Activated CD4-positive, alpha-beta memory T cell treated with anti-CD3 and anti-CD28 coated beads for 36 hours (primary cell): ENCODE measurements at regions of chr2 and their contacts with region 1.

Region 1: DNA sequence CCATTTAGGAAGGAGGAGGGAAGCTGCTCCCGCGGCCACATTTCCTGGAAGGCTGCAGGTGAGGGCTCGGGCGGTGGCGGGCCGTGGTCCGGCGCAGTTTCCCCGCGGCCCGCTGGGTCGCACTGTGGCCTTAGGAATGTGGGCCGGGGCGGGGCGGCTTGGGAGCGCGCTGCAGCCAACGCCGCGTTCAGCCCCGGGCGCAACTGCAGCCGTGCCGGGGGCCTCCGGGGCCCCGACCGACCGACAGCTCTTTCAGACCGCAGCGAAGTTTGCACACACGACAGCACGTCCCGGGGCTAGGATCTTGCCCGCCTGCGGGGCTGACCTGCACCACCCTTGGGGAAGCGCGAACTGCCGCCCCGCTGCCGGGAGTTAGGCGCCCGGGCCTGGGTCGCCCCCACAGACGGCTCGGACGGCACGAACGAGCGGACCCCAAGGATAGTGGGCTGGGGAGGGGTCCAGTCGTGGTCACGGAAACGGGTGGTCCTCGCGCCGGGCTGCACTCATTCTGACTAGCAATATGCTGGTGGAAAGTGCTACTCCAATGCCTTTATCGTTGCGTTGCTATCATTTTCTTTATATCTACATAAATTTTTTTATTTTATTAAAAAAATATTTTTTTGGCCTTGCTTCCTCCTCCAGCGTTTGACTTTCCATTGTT is 69.9 kb upstream of the DLX2 start:
- DNase-seq: peak; percentile 71
- H3K4me3 Mint-ChIP-seq: peak overlapping the region; percentile 58
- H3K27ac Mint-ChIP-seq: no peak overlapping the region
- H3K4me1 Mint-ChIP-seq: peaks cover 8% of the 10 kb centered on the region
- H3K27me3 Mint-ChIP-seq: peaks cover 3% of the 10 kb centered on the region

Region 2: GRCh38 chr2:172131713-172132555 is 40.7 kb before region 1 on chr2:
- CTCF ChIA-PET with region 1: interaction called, 10 read pairs
- POLR2A ChIA-PET with region 1: no interaction called
- intact Hi-C with region 1: no loop called
- DNase-seq: no peak
- H3K4me3 Mint-ChIP-seq: no peak overlapping the region
- H3K27ac Mint-ChIP-seq: no peak overlapping the region
- H3K4me1 Mint-ChIP-seq: no peaks in the 10 kb centered on the region
- H3K27me3 Mint-ChIP-seq: peaks cover 8% of the 10 kb centered on the region

Region 3: DNA sequence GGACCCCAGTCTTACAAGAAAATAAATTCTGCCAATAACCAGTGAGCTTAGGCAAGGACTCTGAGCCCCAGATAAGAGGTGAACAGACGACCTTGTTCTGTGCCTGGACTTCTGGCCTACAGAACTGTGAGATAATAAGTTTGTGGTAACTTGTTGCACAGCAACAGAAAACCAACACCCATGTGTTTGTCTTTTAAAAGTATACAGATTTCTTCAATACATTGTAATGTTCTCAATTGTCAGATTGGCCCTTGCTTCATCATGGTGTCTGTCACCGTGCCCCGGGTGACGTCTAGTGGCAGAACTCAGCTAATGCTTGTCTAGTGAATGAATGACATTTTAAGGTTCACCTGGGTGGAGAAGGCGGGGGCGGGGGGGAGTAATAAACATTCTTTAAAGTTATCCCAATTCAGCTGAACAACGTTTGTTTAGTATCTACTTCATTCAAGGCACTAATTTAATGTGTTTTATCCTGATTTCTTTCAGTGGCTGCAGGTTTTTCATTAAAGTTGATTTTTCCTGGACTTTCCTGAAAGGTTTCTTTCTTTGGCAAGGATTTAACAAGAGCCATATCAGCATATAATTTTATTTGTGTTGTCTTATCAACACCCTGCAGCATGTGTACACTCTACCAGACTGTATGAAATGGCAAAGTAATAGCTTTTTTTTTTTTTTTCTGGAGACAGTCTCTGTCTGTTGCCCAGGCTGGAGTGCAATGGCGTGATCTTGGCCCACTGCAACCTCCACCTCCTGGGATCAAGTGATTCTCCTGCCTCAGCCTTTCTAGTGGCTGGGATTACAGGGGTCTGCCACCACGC is 53.8 kb after region 1 on chr2:
- CTCF ChIA-PET with region 1: no interaction called
- POLR2A ChIA-PET with region 1: no interaction called
- intact Hi-C with region 1: loop called (anchors 2 kb)
- DNase-seq: peak; percentile 50
- H3K4me3 Mint-ChIP-seq: no peak overlapping the region
- H3K27ac Mint-ChIP-seq: no peak overlapping the region
- H3K4me1 Mint-ChIP-seq: peaks cover 38% of the 10 kb centered on the region
- H3K27me3 Mint-ChIP-seq: no peaks in the 10 kb centered on the region

Region 4: GRCh38 chr2:172484253-172484652 is 311.6 kb after region 1 on chr2:
- CTCF ChIA-PET with region 1: interaction called, 3 read pairs
- POLR2A ChIA-PET with region 1: no interaction called
- intact Hi-C with region 1: loop called (anchors 1 kb)
- DNase-seq: no peak
- H3K4me3 Mint-ChIP-seq: no peak overlapping the region
- H3K27ac Mint-ChIP-seq: no peak overlapping the region
- H3K4me1 Mint-ChIP-seq: peaks cover 26% of the 10 kb centered on the region
- H3K27me3 Mint-ChIP-seq: no peaks in the 10 kb centered on the region

Region 5: DNA sequence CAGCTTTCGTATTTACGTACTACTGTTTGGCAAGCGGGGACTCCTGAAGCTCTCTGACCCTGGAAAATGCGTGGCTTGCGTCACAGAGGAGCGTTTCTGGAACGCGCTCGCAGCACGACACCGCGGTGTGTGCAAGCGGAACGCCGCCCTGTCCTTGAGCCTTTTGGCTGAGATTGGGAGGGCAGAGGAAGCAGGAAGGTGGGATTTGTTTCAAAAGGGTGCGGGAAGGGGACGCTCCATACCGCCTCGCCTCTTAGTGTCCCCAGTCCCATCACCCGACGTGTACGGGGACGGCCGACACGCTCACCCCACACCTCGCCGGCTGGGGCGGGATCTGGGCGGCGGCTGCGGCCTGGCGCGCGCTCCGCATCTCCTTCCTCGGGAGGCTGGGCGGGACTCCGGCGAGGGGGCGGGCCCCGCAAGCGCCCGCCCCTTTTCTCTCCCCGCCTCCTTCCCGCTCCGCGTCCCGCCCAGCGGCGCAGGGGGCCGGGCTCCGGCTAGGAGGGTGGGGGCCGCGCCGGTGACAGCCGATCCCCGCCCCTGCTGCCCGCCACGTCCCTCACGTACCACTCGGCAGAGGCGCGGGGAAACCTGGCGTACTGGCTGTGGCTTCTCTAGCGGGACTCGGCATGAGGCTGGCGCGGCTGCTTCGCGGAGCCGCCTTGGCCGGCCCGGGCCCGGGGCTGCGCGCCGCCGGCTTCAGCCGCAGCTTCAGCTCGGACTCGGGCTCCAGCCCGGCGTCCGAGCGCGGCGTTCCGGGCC is 383.1 kb after region 1 on chr2 and contains the start of gene PDK1:
- CTCF ChIA-PET with region 1: no interaction called
- POLR2A ChIA-PET with region 1: no interaction called
- intact Hi-C with region 1: loop called (anchors 10 kb)
- DNase-seq: peak; percentile 93
- H3K4me3 Mint-ChIP-seq: peak within 1 kb of the TSS; percentile 90
- H3K27ac Mint-ChIP-seq: peak within 1 kb of the TSS; percentile 90
- H3K4me1 Mint-ChIP-seq: peaks cover 45% of the 10 kb centered on the region
- H3K27me3 Mint-ChIP-seq: peaks cover 6% of the 10 kb centered on the region
- total RNA-seq, gene PDK1: 24.7 to 31.6 TPM

Region 6: GRCh38 chr2:172704072-172704936 is 531.7 kb after region 1 on chr2:
- CTCF ChIA-PET with region 1: no interaction called
- POLR2A ChIA-PET with region 1: no interaction called
- intact Hi-C with region 1: loop called (anchors 10 kb)
- DNase-seq: no peak
- H3K4me3 Mint-ChIP-seq: no peak overlapping the region
- H3K27ac Mint-ChIP-seq: no peak overlapping the region
- H3K4me1 Mint-ChIP-seq: no peaks in the 10 kb centered on the region
- H3K27me3 Mint-ChIP-seq: peaks cover 8% of the 10 kb centered on the region